ENCODE measurements at regions of chr3 and their contacts with region 1.

Region 1: DNA sequence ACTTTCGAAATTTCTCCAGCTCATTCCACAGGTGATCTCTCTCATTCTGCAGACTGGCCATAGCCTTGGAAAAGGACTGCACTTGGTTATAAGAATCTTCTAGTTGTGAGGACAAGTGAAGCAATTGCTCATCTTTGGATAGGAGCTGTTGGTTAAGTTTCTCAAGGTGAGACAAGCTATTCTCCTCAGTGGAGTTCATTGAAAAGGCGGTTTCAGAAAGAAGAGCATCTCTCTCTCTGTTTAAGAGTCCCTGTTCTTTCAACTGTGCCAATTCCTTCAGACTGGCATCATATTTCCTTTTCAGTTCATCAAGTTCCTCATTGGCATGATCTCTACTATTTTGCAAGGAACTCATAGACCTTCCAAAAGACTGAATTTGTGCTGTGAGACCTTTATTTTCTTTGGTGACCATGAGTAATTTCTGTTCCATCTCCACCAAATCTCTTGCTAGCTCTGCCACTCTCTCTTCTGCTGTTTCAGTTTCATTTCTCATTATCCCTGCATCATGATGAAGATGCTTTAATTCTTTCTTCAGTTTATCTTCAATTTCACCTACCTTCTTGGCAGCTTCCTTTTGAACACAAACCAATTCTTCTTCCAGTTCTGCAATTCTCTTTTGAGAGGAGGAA is 30.2 kb upstream of the HCLS1 start:
- DNase-seq: peak; percentile 60
- H3K4me3 Mint-ChIP-seq: peak overlapping the region; percentile 28
- H3K27ac Mint-ChIP-seq: peak overlapping the region; percentile 31
- H3K4me1 Mint-ChIP-seq: peaks cover 18% of the 10 kb centered on the region
- H3K27me3 Mint-ChIP-seq: no peaks in the 10 kb centered on the region

Region 2: GRCh38 chr3:121654493-121655385 is 36.2 kb before region 1 on chr3:
- intact Hi-C with region 1: loop called (anchors 5 kb)
- DNase-seq: peak; percentile 69
- H3K4me3 Mint-ChIP-seq: peak overlapping the region; percentile 79
- H3K27ac Mint-ChIP-seq: peak overlapping the region; percentile 97
- H3K4me1 Mint-ChIP-seq: peaks cover 68% of the 10 kb centered on the region
- H3K27me3 Mint-ChIP-seq: no peaks in the 10 kb centered on the region

Region 3: GRCh38 chr3:121707531-121708273 is 16.8 kb after region 1 on chr3:
- intact Hi-C with region 1: no loop called
- DNase-seq: no peak
- H3K4me3 Mint-ChIP-seq: no peak overlapping the region
- H3K27ac Mint-ChIP-seq: no peak overlapping the region
- H3K4me1 Mint-ChIP-seq: no peaks in the 10 kb centered on the region
- H3K27me3 Mint-ChIP-seq: no peaks in the 10 kb centered on the region

Region 4: DNA sequence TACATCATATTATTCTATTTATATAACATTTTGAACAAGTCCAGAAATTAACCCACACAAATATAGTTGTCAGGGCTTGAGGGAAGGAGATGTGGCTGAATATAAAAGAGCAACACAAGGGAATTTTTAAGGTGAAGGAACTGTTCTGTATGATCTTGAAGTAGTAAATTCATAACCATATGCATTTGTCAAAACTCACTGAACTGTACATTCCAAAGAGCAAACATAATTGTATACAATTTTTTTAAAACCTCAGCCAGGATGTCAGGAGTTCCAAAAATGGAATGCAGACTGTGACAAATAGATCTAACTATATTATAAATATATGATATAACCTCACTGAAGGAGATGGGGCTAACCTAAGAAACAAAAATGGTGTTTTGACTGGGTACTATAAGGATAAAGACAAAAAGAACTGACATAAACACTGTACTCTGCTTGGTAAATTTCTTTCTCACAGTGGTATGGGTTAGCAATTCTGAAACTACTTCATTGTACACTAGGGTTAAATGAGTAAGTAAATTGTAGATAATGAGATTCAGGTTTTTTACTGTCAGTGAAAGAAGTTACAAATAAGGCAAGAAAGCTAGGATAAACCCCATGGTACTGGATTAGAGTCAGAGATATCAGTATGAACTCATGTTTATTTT is 44.3 kb after region 1 on chr3:
- intact Hi-C with region 1: loop called (anchors 5 kb)
- DNase-seq: no peak
- H3K4me3 Mint-ChIP-seq: no peak overlapping the region
- H3K27ac Mint-ChIP-seq: peak overlapping the region; percentile 60
- H3K4me1 Mint-ChIP-seq: peaks cover 24% of the 10 kb centered on the region
- H3K27me3 Mint-ChIP-seq: no peaks in the 10 kb centered on the region